AG04450 (cell line): ENCODE measurements at regions of chr3 and their contacts with region 1.

Region 1: DNA sequence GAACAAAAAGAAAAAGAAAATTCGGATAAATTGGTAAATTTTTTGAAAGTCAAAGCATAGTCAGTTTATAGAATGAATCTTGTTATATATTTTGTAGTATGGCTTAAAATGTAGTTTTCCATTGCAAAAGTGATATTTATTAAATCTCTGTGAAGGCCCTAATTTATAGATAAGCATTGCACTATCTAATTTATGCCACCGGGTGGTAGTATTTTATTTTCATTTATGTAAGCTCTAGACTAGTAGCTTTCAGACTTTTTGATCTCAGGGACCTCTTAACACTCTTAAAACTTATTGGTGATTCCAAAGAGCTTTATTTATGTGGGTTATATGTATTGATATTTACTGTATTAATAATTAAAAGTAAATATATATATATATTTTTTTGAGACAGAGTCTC is 133.9 kb upstream of the LRRFIP2 start:
- DNase-seq: no peak
- H3K4me3 ChIP-seq: no peak overlapping the region
- H3K27ac ChIP-seq: no peak overlapping the region
- H3K27me3 ChIP-seq: no peaks in the 10 kb centered on the region
- CTCF ChIP-seq: peak; percentile 51

Region 2: DNA sequence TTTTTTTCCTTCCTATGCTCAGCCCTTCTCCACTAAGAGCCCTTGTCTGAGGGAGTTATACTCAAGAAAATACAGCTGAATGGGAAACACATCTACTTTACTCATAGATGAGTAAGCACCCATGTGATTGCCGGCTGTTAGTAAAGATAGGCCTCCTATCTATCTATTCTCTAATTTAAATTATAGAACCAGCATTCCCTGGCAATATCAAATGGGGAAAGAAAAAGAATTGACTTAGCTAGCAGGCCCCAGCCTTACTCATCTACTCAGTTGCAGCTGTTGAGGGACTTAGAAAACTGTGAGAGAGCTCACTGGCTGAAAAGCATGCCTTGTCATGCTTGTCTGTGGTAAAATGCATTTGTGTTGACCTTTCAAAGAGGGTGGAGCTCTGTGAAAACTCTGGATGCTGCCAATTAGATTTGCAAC is 17.0 kb before region 1 on chr3:
- CTCF ChIA-PET with region 1: interaction called, 41 read pairs
- POLR2A ChIA-PET with region 1: interaction called, 3 read pairs
- DNase-seq: peak; percentile 56
- H3K4me3 ChIP-seq: no peak overlapping the region
- H3K27ac ChIP-seq: peak overlapping the region; percentile 77
- H3K27me3 ChIP-seq: no peaks in the 10 kb centered on the region
- CTCF ChIP-seq: no peak

Region 3: DNA sequence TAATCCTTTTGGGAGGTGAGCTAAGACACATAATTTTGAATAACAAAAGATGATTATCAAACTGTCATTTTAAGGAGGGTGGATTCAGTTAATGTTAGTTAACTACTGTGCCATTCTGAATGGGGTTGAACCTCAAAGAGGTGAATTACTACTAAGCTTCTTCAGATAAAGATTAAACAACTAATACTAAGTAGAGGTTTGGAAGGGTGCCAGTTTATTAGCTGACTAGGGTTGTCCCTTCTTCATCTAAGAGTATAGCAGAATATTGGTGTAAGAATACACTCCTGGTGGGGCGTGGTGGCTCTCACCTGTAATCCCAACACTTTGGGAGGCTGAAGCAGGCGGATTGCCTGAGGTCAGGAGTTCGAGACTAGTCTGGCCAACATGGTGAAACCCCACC is 10.8 kb before region 1 on chr3:
- CTCF ChIA-PET with region 1: interaction called, 41 read pairs
- POLR2A ChIA-PET with region 1: no interaction called
- DNase-seq: no peak
- H3K4me3 ChIP-seq: no peak overlapping the region
- H3K27ac ChIP-seq: no peak overlapping the region
- H3K27me3 ChIP-seq: no peaks in the 10 kb centered on the region
- CTCF ChIP-seq: no peak

Region 4: DNA sequence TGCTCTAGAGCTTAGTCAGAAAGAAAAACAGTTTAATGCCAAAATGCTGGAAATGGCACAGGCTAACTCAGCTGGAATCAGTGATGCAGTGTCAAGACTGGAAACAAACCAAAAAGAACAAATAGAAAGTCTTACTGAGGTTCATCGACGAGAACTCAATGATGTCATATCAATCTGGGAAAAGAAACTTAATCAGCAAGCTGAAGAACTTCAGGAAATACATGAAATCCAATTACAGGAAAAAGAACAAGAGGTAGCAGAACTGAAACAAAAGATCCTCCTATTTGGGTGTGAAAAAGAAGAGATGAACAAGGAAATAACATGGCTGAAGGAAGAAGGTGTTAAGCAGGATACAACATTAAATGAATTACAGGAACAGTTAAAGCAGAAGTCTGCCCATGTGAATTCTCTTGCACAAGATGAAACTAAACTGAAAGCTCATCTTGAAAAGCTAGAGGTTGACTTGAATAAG is 16.6 kb after region 1 on chr3:
- CTCF ChIA-PET with region 1: interaction called, 27 read pairs
- POLR2A ChIA-PET with region 1: no interaction called
- DNase-seq: no peak
- H3K4me3 ChIP-seq: no peak overlapping the region
- H3K27ac ChIP-seq: no peak overlapping the region
- H3K27me3 ChIP-seq: no peaks in the 10 kb centered on the region
- CTCF ChIP-seq: no peak

Region 5: GRCh38 chr3:37338500-37338899 is 30.3 kb after region 1 on chr3:
- CTCF ChIA-PET with region 1: interaction called, 11 read pairs
- POLR2A ChIA-PET with region 1: no interaction called
- DNase-seq: no peak
- H3K4me3 ChIP-seq: no peak overlapping the region
- H3K27ac ChIP-seq: no peak overlapping the region
- H3K27me3 ChIP-seq: no peaks in the 10 kb centered on the region
- CTCF ChIP-seq: no peak

Region 6: DNA sequence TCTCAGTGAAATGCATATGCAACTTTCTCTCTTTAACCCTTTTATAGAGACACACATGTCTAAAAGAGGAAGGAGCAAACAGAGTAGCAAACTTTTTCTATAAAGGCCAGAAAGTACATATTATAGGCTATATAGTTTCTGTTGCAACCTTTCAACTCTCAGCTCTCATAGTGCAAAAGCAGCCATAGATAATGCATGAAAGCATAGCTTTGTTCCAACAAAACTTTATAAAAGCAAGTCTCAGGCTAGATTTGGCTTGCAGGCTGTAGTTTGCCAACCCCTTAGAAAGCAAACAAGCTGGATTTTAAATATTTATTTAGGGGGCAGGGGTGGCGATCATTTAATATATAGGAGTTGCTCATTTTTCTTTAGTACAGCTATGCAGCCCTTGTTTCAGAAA is 59.2 kb after region 1 on chr3:
- CTCF ChIA-PET with region 1: interaction called, 12 read pairs
- POLR2A ChIA-PET with region 1: no interaction called
- DNase-seq: no peak
- H3K4me3 ChIP-seq: no peak overlapping the region
- H3K27ac ChIP-seq: no peak overlapping the region
- H3K27me3 ChIP-seq: no peaks in the 10 kb centered on the region
- CTCF ChIP-seq: no peak

Region 7: DNA sequence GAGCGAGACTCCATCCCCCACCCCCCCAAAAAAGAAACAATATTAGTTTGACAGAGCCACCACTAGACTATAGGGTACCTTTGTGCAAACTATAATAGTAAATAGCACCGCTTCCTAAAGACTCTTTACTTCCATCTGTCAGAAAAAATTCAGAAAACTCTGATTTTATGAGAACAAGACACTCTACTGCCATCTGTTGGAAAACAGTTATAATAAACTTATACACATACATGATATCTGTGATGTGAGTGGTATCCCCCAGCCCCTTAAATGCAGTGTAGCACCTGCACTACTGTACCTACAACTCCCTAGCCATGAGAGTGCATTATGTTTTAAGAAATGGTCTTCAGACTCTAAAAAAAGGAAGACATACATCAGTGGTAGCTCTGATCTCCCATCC is 506.3 kb after region 1 on chr3:
- CTCF ChIA-PET with region 1: interaction called, 13 read pairs
- POLR2A ChIA-PET with region 1: no interaction called
- DNase-seq: no peak
- H3K4me3 ChIP-seq: no peak overlapping the region
- H3K27ac ChIP-seq: no peak overlapping the region
- H3K27me3 ChIP-seq: no peaks in the 10 kb centered on the region
- CTCF ChIP-seq: peak; percentile 42